AG04449 (cell line): ENCODE measurements at regions of chr12 and their contacts with region 1.

Region 1: GRCh38 chr12:11228296-11228879 is 41.1 kb downstream of the PRB3 start:
- DNase-seq: no peak
- H3K4me3 ChIP-seq: no peak overlapping the region
- CTCF ChIP-seq: peak; percentile 67

Region 2: DNA sequence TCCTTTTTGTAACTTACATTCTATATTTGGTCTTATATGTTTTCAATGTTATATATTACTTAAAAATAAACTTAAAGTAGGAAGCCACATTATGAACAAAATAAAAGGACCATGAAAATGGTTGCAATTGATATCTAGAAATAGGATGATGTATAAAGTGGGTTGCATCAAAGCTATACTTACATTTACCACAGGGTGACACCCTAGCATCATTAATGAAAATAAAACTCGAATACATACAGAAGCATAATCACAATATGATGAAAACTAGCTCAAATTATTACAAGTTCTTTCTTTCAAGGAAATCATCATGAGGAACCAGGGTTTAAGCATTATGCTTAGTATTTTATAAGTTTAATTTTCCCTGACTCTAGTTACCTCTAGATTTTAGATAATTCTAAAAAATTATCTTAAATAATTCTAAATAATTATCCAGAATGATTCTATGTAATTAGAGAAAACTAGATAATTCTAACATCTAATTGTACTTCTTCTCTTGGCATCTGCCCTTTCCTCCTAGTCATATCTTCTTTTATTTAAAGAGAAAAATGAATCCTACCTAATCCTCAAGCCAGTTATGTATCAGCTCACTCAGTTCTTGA is 457.2 kb before region 1 on chr12:
- CTCF ChIA-PET with region 1: interaction called, 11 read pairs
- POLR2A ChIA-PET with region 1: no interaction called
- DNase-seq: no peak
- H3K4me3 ChIP-seq: no peak overlapping the region
- CTCF ChIP-seq: peak; percentile 44